ENCODE measurements at regions of chr18 and their contacts with region 1.

Region 1: DNA sequence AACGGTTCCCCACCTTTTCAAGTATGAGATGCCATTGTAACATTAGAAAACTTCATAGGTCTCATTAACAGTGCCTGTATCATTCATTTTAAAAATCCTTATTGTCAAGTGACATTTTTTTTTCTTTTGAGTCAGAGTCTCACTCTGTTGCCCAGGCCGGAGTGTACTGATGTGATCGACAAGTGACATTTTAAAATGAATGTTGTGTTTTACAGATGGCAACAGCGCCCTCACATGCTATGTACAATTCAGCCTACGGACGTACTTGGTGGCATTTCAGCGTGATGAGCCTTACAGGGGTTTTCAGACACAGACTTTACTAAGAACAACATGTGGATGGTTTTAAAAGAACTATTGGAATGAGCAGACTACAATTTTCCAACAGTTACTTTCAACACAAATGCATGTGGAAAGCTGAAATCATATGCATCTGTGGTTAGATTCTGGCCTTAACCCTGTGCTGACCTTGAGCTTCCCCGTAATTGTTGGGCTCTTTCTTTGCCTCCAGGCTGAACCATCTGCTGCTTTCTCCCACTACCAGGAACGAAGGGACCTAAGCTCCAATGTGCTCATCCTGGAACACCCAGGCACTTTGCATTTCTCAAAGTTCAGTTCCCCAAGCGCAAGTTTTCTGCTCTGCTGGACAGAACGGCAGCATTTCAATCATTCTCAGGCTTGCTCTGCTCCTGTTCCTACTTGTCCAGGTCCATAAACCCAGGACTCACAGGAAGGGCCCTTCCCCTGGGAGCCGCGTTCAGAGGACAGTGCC is 119.9 kb upstream of the NDUFV2 start:
- DNase-seq: peak; percentile 60
- ATAC-seq: peak; percentile 92
- H3K4me3 ChIP-seq: peak overlapping the region in 1 of 3 experiments; percentile 47; a peak in 2 of 6 replicates
- H3K27ac ChIP-seq: no peak overlapping the region
- H3K4me1 ChIP-seq: peaks cover 42% of the 10 kb centered on the region
- H3K27me3 ChIP-seq: peaks cover 0 to 13% of the 10 kb centered on the region in 2 experiments; a peak in 1 of 5 replicates
- CTCF ChIP-seq: peak; percentile 88
- EP300 ChIP-seq: no peak
- POLR2A ChIP-seq: no peak
- RAD21 ChIP-seq: peak; percentile 76

Region 2: DNA sequence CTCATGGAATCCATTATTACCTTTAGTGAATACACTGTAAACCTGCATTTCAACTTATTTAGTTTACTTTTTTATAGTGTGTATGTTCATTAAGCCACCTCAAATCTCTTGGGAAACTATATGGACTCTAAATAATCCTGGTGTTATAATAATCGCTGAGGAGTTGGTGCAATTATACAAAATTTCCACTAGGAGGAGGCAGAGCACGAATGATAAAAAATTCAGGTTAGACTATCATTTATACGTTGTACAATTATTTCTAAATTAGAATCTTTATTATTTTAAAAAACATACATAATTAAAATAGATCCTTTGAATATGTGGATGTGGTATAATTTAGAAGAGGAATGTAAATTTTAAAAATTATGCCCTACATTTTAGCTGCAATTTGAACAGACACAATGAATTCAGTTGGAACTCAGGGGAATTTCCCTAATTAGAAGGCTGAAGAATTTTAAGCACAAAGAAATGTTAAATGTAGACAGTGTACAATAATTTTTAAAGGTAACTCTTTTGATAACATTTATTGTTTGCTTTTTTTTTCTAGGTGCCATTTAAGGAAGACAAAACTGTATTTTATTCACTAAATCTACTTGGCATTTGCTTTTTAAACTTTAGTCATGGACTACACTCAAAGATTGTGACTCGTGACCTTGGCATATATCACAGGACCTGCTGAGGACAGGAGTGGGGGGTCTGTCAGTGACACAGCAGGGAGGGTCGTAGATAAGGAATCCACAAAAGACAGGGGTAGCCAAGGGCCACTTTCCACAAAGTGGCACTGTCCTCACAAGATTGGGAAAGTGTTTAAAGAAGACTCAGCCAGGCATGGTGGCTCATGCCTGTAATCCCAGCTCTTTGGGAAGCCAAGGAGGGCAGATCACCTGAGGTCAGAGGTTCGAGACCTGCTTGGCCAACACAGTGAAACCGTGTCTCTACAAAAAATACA is 327.8 kb before region 1 on chr18:
- CTCF ChIA-PET with region 1: interaction called, 12 read pairs
- POLR2A ChIA-PET with region 1: no interaction called
- in situ Hi-C with region 1: loop called (anchors 5 kb)
- intact Hi-C with region 1: no loop called
- DNase-seq: no peak
- ATAC-seq: no peak
- H3K4me3 ChIP-seq: no peak overlapping the region
- H3K27ac ChIP-seq: no peak overlapping the region
- H3K4me1 ChIP-seq: no peaks in the 10 kb centered on the region; the same call in 1 of the 2 replicates
- H3K27me3 ChIP-seq: peaks cover 4 to 25% of the 10 kb centered on the region in 2 experiments; a peak in 4 of 5 replicates
- CTCF ChIP-seq: peak; percentile 58
- EP300 ChIP-seq: no peak
- POLR2A ChIP-seq: no peak
- RAD21 ChIP-seq: no peak

Region 3: DNA sequence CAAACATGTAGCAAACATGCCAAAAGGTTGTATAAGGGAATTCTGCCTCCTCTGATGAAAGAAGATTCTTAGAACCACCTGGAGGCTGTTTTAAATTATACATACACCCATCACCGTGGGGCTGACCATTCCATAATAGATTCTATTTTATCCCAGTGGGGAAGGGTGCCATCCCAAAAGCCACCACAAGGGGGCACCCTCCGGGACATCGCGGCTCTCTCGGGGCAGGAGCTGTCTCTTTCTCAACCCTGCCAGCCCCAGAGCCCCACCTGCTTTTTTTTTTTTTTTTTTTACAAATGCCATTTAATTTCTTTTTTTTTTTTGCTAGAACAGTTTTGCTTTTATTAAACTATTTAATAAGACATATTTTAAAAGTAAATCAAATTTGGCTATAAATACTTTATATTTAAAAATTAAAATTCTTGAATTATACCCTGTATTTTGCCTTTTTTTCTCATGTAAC is 285.8 kb before region 1 on chr18:
- CTCF ChIA-PET with region 1: interaction called, 14 read pairs
- POLR2A ChIA-PET with region 1: no interaction called
- in situ Hi-C with region 1: no loop called
- intact Hi-C with region 1: loop called (anchors 1 kb)
- DNase-seq: peak; percentile 24
- ATAC-seq: peak; percentile 81
- H3K4me3 ChIP-seq: no peak overlapping the region
- H3K27ac ChIP-seq: no peak overlapping the region
- H3K4me1 ChIP-seq: peaks cover 5% of the 10 kb centered on the region; the same call in 1 of the 2 replicates
- H3K27me3 ChIP-seq: peaks cover 0 to 7% of the 10 kb centered on the region in 2 experiments; a peak in 2 of 5 replicates
- CTCF ChIP-seq: peak; percentile 73
- EP300 ChIP-seq: no peak
- POLR2A ChIP-seq: no peak
- RAD21 ChIP-seq: peak; percentile 45; the same call in 1 of the 2 replicates

Region 4: DNA sequence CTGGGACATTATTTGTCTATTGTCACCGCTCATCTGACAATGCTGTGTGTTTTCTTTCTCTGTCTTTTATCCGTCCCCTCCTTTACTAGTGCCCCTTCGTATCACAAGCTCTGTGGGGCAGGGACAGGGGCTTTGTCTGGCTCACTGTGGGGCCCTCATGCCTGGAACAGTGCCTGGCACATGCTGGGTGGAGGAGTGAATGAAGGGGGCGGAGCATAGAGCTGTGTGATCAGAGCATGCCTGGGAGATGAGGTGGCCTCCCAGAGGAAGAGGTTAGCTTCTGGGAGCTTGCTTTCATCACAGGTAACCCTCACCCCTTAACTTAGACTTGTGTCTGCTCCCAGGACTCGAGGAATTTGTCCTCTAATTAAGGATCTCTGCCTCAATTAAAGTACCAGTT is 260.9 kb before region 1 on chr18:
- CTCF ChIA-PET with region 1: no interaction called
- POLR2A ChIA-PET with region 1: no interaction called
- in situ Hi-C with region 1: no loop called
- intact Hi-C with region 1: no loop called
- DNase-seq: peak; percentile 41
- ATAC-seq: no peak; the same call in 2 of the 3 replicates
- H3K4me3 ChIP-seq: no peak overlapping the region
- H3K27ac ChIP-seq: no peak overlapping the region
- H3K4me1 ChIP-seq: peaks cover 23% of the 10 kb centered on the region
- H3K27me3 ChIP-seq: no peaks in the 10 kb centered on the region
- CTCF ChIP-seq: no peak
- EP300 ChIP-seq: no peak
- POLR2A ChIP-seq: no peak
- RAD21 ChIP-seq: no peak

Region 5: DNA sequence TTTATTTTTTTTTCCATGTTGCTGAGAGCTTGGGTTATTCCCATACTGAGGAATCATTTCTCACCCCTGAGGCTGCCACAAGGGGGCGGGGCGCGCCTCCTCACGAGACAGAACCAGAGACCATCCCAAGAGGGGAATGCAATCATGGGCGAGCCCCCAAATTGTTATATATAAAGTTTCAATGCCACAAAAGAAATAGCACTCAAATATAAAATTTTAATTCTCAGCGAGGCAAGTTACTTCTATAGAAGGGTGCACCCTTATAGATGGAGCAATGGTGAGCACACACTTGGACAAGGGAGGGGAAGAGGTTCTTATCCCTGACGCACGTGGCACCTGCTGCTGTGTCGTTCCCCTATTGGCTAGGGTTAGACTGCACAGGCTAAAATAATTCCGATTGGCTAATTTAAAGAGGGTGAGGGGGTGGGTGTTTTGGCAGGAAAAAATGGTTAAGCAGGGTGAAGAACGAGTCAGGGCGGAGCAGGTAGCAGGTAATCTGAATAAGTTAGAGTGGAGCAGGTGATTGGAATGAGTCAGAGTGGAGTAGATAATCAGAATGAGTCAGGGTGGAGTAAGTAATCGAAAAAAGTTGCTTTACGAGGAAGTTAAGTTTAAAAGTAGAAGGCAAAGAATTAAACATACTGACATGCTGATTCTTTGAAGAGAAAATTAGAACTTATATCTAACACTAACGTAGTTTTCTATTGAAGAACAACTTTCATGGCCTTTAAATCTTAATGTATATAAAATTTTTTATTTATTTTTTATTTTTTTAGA is 99.8 kb before region 1 on chr18:
- CTCF ChIA-PET with region 1: interaction called, 12 read pairs
- POLR2A ChIA-PET with region 1: no interaction called
- in situ Hi-C with region 1: loop called (anchors 5 kb)
- intact Hi-C with region 1: loop called (anchors 1 kb)
- DNase-seq: peak; percentile 21
- ATAC-seq: peak; percentile 75
- H3K4me3 ChIP-seq: no peak overlapping the region
- H3K27ac ChIP-seq: no peak overlapping the region
- H3K4me1 ChIP-seq: no peaks in the 10 kb centered on the region
- H3K27me3 ChIP-seq: no peaks in the 10 kb centered on the region; a peak in 1 of 5 replicates
- CTCF ChIP-seq: peak; percentile 72
- EP300 ChIP-seq: no peak
- POLR2A ChIP-seq: no peak
- RAD21 ChIP-seq: no peak

Region 6: GRCh38 chr18:8922669-8923068 is 59.9 kb before region 1 on chr18:
- CTCF ChIA-PET with region 1: no interaction called
- POLR2A ChIA-PET with region 1: no interaction called
- in situ Hi-C with region 1: no loop called
- intact Hi-C with region 1: loop called (anchors 5 kb)
- DNase-seq: no peak
- ATAC-seq: no peak
- H3K4me3 ChIP-seq: no peak overlapping the region
- H3K27ac ChIP-seq: no peak overlapping the region
- H3K4me1 ChIP-seq: no peaks in the 10 kb centered on the region
- H3K27me3 ChIP-seq: no peaks in the 10 kb centered on the region
- CTCF ChIP-seq: no peak
- EP300 ChIP-seq: no peak
- POLR2A ChIP-seq: no peak
- RAD21 ChIP-seq: no peak

Measured in HepG2 (cell line).